GM12878 (cell line): ENCODE measurements at regions of chr9 and their contacts with region 1.

Region 1: DNA sequence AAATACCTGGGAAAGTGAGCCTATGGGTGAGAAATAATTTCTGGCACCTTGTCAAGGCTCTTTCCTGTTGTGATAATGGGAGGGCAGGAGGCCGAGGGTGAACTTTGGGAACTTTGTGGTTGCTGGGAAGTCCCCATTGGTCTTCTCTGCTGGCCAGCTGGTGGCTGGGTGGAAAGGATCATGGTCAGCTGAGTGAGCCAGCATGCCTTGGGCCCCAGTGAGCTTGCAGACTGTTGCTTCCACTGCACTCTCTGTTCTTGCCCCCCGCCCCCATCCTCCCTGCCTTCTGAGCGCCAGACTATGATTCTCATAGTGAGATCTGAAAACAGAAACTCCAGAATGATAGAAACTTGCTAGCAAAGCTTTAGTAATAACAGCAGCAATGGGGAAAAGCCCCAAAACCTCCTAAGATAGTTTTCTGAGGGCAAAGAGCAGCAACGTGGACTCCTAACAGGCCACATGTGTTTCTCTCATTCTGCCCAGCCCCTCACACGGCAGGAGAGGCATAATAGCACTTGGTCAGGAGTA is 139.2 kb upstream of the SMARCA2 start:
- DNase-seq: peak; percentile 97
- ATAC-seq: peak; percentile 79
- H3K4me3 ChIP-seq: peak overlapping the region; percentile 37
- H3K27ac ChIP-seq: peak overlapping the region; percentile 98
- H3K4me1 ChIP-seq: peaks cover 63% of the 10 kb centered on the region
- H3K27me3 ChIP-seq: no peaks in the 10 kb centered on the region
- CTCF ChIP-seq: no peak
- EP300 ChIP-seq: peak; percentile 90 to 97
- POLR2A ChIP-seq: peak; percentile 67
- RAD21 ChIP-seq: peak; percentile 38

Region 2: DNA sequence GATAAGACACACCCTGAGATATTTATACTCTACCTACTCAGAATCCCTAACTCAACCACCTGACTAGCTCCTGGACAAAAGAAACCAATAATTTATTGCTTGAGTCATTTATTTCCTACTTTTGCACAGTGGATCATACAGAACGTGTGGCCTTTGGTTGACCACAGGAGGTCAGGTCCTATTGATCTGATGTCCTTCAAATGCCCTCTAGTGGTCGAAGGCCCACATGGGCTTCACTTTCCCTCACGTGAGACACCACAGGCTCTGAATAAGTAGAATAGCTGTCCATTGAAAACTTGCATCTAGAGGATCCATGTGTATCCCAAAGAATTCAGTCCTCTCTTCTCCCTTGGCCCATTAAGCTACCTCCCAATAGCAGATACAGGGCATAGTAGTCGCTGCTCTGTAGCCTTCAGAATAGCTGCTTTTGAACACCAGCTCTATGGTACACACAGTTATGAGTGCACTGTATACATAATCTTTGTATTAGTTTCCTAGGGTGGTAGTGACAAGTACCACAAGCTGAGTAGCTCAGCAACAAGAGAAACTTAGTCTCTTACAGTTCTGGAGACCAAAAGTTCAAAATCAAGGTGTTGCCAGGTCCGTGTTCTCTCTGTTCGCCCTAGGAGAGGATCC is 38.4 kb before region 1 on chr9:
- CTCF ChIA-PET with region 1: interaction called, 59 read pairs
- POLR2A ChIA-PET with region 1: interaction called, 3 read pairs
- RAD21 ChIA-PET with region 1: interaction called, 17 read pairs
- SMC1A ChIA-PET with region 1: interaction called, 19 read pairs
- in situ Hi-C with region 1: no loop called
- intact Hi-C with region 1: no loop called
- DNase-seq: peak; percentile 45
- ATAC-seq: peak; percentile 98
- H3K4me3 ChIP-seq: no peak overlapping the region
- H3K27ac ChIP-seq: no peak overlapping the region
- H3K4me1 ChIP-seq: no peaks in the 10 kb centered on the region
- H3K27me3 ChIP-seq: no peaks in the 10 kb centered on the region
- CTCF ChIP-seq: peak; percentile 70 to 77 (median 74)
- EP300 ChIP-seq: no peak
- POLR2A ChIP-seq: no peak
- RAD21 ChIP-seq: peak; percentile 71

Region 3: GRCh38 chr9:1916655-1917054 is 40.7 kb after region 1 on chr9:
- CTCF ChIA-PET with region 1: interaction called, 15 read pairs
- POLR2A ChIA-PET with region 1: interaction called, 3 read pairs
- RAD21 ChIA-PET with region 1: interaction called, 19 read pairs
- SMC1A ChIA-PET with region 1: interaction called, 24 read pairs
- in situ Hi-C with region 1: no loop called
- intact Hi-C with region 1: no loop called
- DNase-seq: no peak
- ATAC-seq: no peak
- H3K4me3 ChIP-seq: no peak overlapping the region
- H3K27ac ChIP-seq: no peak overlapping the region
- H3K4me1 ChIP-seq: peaks cover 3% of the 10 kb centered on the region; the same call in 1 of the 2 replicates
- H3K27me3 ChIP-seq: no peaks in the 10 kb centered on the region
- CTCF ChIP-seq: no peak
- EP300 ChIP-seq: no peak
- POLR2A ChIP-seq: no peak
- RAD21 ChIP-seq: no peak

Region 4: DNA sequence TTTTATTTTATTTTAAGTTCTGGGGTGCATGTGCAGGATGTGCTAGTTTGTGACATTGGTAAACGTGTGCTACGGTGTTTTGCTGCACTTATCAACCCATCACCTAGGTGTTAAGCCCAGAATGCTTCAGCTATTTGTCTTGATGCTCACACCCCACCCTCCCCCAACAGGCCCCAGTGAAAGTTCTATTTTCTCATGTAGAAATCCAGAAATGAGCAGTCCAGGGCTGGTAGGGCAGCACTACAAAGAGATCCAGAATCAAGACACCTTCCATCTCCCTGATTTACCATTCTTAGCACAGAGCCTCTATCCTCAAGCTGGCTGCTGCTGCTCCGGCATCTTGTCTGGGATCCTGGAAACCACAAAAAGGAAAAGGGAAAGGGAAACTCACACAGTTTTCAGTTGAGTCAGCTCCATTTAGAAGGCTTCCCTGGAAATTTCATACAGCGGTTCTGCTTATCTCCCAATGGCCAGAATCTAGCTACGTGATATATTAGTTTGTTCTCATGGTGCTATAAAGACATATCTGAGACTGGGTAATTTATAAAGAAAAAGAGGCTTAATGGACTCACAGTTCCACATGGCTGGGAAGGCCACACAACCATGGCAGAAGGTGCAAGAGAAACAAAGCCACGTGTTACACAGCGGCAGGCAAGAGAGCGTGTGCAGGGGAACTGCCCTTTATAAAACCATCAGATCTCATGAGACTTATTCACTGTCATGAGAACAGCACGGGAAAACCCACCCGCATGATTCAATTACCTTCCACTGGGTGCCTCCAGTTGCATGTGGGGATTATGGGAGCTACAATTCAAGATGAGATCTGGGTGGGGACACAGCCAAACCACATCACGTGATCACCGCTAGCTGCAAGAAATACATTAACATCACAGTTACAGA is 54.0 kb after region 1 on chr9:
- CTCF ChIA-PET with region 1: interaction called, 17 read pairs
- POLR2A ChIA-PET with region 1: interaction called, 15 read pairs
- RAD21 ChIA-PET with region 1: interaction called, 56 read pairs
- SMC1A ChIA-PET with region 1: interaction called, 58 read pairs
- in situ Hi-C with region 1: loop called (anchors 5 kb)
- intact Hi-C with region 1: loop called (anchors 1 kb)
- DNase-seq: peak; percentile 84
- ATAC-seq: peak; percentile 87
- H3K4me3 ChIP-seq: peak overlapping the region; percentile 58
- H3K27ac ChIP-seq: peak overlapping the region; percentile 88
- H3K4me1 ChIP-seq: peaks cover 24% of the 10 kb centered on the region
- H3K27me3 ChIP-seq: no peaks in the 10 kb centered on the region
- CTCF ChIP-seq: 0 out of 6 replicates have a peak, but pooled peaks of 1 of the 3 experiments have one; percentile 6
- EP300 ChIP-seq: peak; percentile 39 to 73; a peak in 1 of 4 replicates
- POLR2A ChIP-seq: no peak
- RAD21 ChIP-seq: peak; percentile 44

Region 5: GRCh38 chr9:2053883-2054845 is 178.2 kb after region 1 on chr9:
- CTCF ChIA-PET with region 1: interaction called, 3 read pairs
- POLR2A ChIA-PET with region 1: interaction called, 4 read pairs
- RAD21 ChIA-PET with region 1: interaction called, 9 read pairs
- SMC1A ChIA-PET with region 1: interaction called, 3 read pairs
- in situ Hi-C with region 1: loop called (anchors 5 kb)
- intact Hi-C with region 1: loop called (anchors 2 kb)
- DNase-seq: peak; percentile 95
- ATAC-seq: peak; percentile 95
- H3K4me3 ChIP-seq: peak overlapping the region; percentile 31; the same call in 1 of the 2 replicates
- H3K27ac ChIP-seq: peak overlapping the region; percentile 78
- H3K4me1 ChIP-seq: peaks cover 33% of the 10 kb centered on the region
- H3K27me3 ChIP-seq: no peaks in the 10 kb centered on the region
- CTCF ChIP-seq: no peak
- EP300 ChIP-seq: peak; percentile 87 to 88
- POLR2A ChIP-seq: 0 out of 2 replicates have a peak, but pooled peaks have one; percentile 28
- RAD21 ChIP-seq: 0 out of 2 replicates have a peak, but pooled peaks have one; percentile 6

Region 6: GRCh38 chr9:2158111-2158610 is 282.2 kb after region 1 on chr9:
- CTCF ChIA-PET with region 1: no interaction called
- POLR2A ChIA-PET with region 1: no interaction called
- RAD21 ChIA-PET with region 1: no interaction called
- SMC1A ChIA-PET with region 1: no interaction called
- in situ Hi-C with region 1: no loop called
- intact Hi-C with region 1: loop called (anchors 5 kb)
- DNase-seq: peak; percentile 39
- ATAC-seq: peak; percentile 78
- H3K4me3 ChIP-seq: peak overlapping the region; percentile 79
- H3K27ac ChIP-seq: peak overlapping the region; percentile 75
- H3K4me1 ChIP-seq: peaks cover 8% of the 10 kb centered on the region; the same call in 1 of the 2 replicates
- H3K27me3 ChIP-seq: no peaks in the 10 kb centered on the region
- CTCF ChIP-seq: no peak
- EP300 ChIP-seq: 0 out of 4 replicates have a peak, but pooled peaks of 1 of the 2 experiments have one; percentile 10
- POLR2A ChIP-seq: no peak
- RAD21 ChIP-seq: no peak